HEK293T (cell line): ENCODE measurements at regions of chr17 and their contacts with region 1.

Region 1: GRCh38 chr17:74864866-74865395 is 5.2 kb upstream of the GRIN2C start:
- DNase-seq: peak; percentile 80

Region 2: GRCh38 chr17:74790161-74791054 is 74.5 kb before region 1 on chr17:
- CTCF ChIA-PET with region 1: interaction called, 27 read pairs
- POLR2A ChIA-PET with region 1: no interaction called
- DNase-seq: no peak

Region 3: GRCh38 chr17:74833501-74834377 is 31.2 kb before region 1 on chr17:
- CTCF ChIA-PET with region 1: interaction called, 17 read pairs
- POLR2A ChIA-PET with region 1: no interaction called
- DNase-seq: no peak

Region 4: DNA sequence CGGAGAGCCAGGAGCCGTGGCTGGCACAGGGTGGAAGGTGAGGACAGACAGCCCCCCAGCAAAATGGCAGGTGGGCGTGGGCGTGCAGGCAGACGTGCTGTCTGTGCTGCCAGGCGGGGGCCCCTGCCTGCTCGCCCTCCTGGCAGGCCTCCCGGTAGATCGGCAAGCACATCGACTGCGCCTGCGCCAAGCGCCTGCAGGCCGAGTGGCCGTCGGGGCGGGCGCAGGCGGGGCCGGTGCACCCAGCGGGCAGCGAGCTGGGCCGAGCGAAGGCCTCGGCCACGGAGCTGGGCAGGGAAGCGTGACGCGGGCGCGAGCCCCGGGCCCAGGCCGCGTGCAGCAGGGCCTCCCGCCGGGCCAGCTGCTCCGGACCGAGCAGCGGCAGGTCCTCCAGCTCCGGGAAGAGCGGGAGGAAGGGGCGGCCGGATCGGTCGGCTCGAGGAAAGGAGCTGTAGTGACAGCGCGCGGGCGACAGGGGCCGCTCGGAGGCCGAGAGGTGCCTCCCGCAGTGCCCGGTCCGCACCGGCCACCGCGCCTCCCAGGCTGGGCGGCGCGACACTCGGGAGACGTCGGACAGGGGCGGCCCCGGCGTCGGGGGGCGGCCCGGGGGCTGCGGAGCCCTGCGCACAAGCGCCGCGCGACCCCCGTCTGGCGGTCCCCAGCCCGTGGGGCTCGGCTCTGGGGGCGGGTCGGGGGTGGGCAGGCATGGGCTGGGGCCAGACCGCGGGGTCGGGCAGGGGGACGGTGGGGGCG is 22.2 kb before region 1 on chr17:
- CTCF ChIA-PET with region 1: interaction called, 25 read pairs
- POLR2A ChIA-PET with region 1: interaction called, 5 read pairs
- DNase-seq: peak; percentile 89

Region 5: DNA sequence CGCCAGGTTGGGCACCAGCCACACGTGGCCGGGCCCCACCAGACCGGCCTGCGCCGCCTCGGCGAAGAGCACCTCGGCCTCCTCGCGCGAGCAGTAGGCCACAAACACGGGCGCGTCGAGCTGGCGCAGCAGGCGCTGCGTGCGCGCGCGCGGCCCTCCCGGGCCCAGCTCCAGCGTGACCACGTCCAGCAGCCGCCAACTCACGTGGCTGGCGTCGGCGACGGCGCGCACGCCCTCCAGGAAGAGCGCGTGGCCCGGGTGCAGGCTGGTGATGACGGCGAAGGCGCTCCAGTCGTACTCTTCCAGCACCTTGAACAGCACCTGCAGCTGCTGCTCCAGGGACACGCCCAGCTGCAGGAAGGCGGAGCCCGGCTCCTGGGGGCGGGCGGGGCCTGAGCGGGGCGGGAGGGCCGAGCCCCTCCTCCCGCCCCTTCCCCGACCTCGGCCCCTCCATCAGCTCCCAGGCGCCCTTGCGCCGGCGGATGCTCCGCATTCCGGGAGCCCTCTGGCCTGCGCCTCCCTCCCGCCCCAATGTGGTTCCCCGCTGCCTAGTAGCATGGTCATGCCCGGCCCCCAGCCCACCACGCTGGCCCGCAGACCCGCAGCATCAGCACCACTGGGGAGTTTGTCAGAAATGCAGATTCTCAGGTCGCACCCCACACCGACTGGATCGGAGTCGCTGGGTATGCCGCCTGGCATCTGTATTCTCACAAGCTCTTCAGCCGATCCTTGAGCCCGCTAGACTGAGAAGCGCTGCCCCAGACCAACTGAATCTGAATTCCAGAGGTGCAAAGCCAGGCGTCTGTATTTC is 12.5 kb before region 1 on chr17:
- CTCF ChIA-PET with region 1: interaction called, 14 read pairs
- POLR2A ChIA-PET with region 1: interaction called, 12 read pairs
- DNase-seq: peak; percentile 84

Region 6: DNA sequence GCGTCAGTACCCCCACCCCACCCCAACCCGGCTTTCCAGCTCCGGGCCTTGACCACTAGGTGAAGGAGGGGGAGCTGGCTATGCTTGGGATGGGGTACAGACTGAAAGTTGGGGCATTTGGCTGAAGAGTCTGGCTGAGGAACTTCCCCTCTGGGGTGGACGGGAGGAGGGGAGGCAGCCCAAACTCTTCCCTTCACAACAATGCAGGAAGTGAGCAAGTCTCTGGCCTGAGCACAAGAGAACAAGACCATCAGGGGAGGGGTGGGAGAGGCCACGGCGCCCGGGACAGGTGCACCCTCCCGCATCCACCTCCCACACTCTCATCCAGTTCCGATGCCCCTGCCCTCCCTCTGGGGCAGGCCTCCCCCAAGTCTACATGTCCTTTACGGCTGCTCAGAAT is 52.5 kb after region 1 on chr17:
- CTCF ChIA-PET with region 1: no interaction called
- POLR2A ChIA-PET with region 1: no interaction called
- DNase-seq: no peak